ENCODE measurements at regions of chr1 and their contacts with region 1.

Region 1: GRCh38 chr1:93374334-93375106 is 28.8 kb downstream of the DR1 start:
- DNase-seq: no peak
- H3K4me3 ChIP-seq: no peak overlapping the region
- H3K27ac ChIP-seq: no peak overlapping the region
- H3K4me1 ChIP-seq: peaks cover 0 to 2% (median 0%) of the 10 kb centered on the region in 4 experiments
- H3K27me3 ChIP-seq: no peaks in the 10 kb centered on the region

Region 2: DNA sequence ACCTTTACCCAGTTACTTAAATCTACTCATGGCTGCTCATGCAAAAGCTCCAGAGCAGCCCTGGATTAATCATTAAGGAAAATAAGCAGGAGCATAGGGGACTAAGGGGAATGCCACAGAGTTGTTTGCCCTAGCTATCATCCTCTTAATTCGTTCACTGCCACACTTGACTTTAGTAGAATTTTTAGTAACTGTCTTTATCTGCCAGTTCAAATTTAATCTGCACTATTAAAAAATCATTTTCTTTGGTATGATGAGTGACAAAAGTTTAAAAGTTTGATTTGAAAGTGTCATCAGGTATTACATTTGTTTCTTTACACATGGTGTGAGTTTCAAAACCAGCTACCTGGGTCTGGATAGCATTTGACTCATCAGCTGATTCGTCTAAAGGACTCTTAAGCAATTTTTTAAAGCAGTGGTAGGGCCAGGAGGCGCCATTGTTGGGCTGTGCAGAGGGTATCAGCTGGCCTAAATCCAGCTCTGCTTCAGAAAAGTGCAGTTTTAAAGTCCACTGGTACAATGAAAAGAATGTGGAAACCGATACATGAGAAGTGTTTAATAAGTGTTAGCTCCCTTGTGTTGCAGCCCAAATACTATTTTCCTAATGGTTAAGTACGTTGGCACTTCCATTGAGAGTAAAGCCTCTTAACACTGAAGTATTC is 98.8 kb before region 1 on chr1:
- CTCF ChIA-PET with region 1: no interaction called
- POLR2A ChIA-PET with region 1: no interaction called
- DNase-seq: no peak
- H3K4me3 ChIP-seq: no peak overlapping the region
- H3K27ac ChIP-seq: no peak overlapping the region
- H3K4me1 ChIP-seq: no peaks in the 10 kb centered on the region
- H3K27me3 ChIP-seq: no peaks in the 10 kb centered on the region

Region 3: DNA sequence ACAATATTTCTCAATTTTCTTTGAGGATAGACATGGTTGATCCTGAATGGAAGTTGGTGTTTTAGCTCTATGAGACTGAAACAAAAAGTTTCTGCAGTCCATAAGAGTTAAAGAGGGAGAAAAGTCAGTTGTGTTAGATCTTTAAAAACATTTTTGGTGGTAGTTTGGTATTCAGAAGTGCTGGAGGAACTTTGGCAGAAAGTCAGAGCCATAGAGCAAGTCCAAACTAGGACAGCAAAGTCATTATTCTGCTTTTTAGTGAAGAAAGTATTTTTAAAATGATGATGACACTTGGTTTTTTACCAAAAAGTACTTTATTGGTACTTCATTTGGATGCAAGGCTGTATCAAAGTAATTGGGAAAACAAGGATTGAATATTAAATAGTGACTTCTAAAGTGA is 115.2 kb after region 1 on chr1:
- CTCF ChIA-PET with region 1: no interaction called
- POLR2A ChIA-PET with region 1: interaction called, 11 read pairs
- DNase-seq: no peak
- H3K4me3 ChIP-seq: no peak overlapping the region
- H3K27ac ChIP-seq: no peak overlapping the region
- H3K4me1 ChIP-seq: peaks cover 0 to 4% (median 0%) of the 10 kb centered on the region in 4 experiments
- H3K27me3 ChIP-seq: no peaks in the 10 kb centered on the region

Measured in common myeloid progenitor, CD34-positive (primary cell).